ENCODE measurements at regions of chr3 and their contacts with region 1.

Region 1: GRCh38 chr3:170307671-170308403 is 49.7 kb upstream of the SKIL start:
- DNase-seq: no peak
- ATAC-seq: no peak
- H3K4me3 ChIP-seq: no peak overlapping the region
- H3K27ac ChIP-seq: no peak overlapping the region
- H3K4me1 ChIP-seq: no peaks in the 10 kb centered on the region
- H3K27me3 ChIP-seq: no peaks in the 10 kb centered on the region
- CTCF ChIP-seq: no peak
- POLR2A ChIP-seq: no peak
- RAD21 ChIP-seq: no peak

Region 2: GRCh38 chr3:170295586-170295985 is 12.3 kb before region 1 on chr3:
- CTCF ChIA-PET with region 1: no interaction called
- POLR2A ChIA-PET with region 1: no interaction called
- RAD21 ChIA-PET with region 1: no interaction called
- intact Hi-C with region 1: no loop called
- DNase-seq: no peak
- ATAC-seq: no peak
- H3K4me3 ChIP-seq: no peak overlapping the region
- H3K27ac ChIP-seq: no peak overlapping the region
- H3K4me1 ChIP-seq: no peaks in the 10 kb centered on the region
- H3K27me3 ChIP-seq: no peaks in the 10 kb centered on the region
- CTCF ChIP-seq: no peak
- POLR2A ChIP-seq: no peak
- RAD21 ChIP-seq: no peak

Region 3: DNA sequence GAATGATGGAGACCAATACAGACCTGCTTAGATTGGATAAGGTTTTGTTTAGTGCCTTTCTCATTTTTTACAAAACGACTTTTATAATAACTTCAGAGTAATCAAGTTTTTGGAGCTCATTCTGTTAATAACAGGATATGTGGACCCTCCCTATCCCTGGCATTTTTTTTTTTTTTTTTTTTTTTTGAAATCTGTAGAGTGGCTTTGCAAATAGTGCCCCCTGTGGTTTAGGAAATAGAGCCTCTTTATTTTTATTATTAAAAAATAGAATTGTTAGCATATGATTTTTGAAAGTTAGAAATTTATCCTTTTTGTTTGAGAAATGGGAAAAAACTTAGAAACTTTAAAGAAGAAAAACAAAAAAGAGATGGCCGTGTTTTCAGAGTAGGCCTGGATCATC is 61.1 kb after region 1 on chr3:
- CTCF ChIA-PET with region 1: no interaction called
- POLR2A ChIA-PET with region 1: no interaction called
- RAD21 ChIA-PET with region 1: no interaction called
- intact Hi-C with region 1: loop called (anchors 2 kb)
- DNase-seq: no peak
- ATAC-seq: no peak
- H3K4me3 ChIP-seq: no peak overlapping the region
- H3K27ac ChIP-seq: no peak overlapping the region
- H3K4me1 ChIP-seq: no peaks in the 10 kb centered on the region
- H3K27me3 ChIP-seq: no peaks in the 10 kb centered on the region
- CTCF ChIP-seq: peak; percentile 37 to 60 (median 38); a peak in 4 of 6 replicates
- POLR2A ChIP-seq: no peak
- RAD21 ChIP-seq: peak; percentile 65

Region 4: GRCh38 chr3:170848292-170848917 is 540.6 kb after region 1 on chr3:
- CTCF ChIA-PET with region 1: no interaction called
- POLR2A ChIA-PET with region 1: no interaction called
- RAD21 ChIA-PET with region 1: no interaction called
- intact Hi-C with region 1: loop called (anchors 5 kb)
- DNase-seq: no peak
- ATAC-seq: peak; percentile 61
- H3K4me3 ChIP-seq: no peak overlapping the region
- H3K27ac ChIP-seq: no peak overlapping the region
- H3K4me1 ChIP-seq: no peaks in the 10 kb centered on the region
- H3K27me3 ChIP-seq: no peaks in the 10 kb centered on the region
- CTCF ChIP-seq: peak; percentile 17 to 65 (median 46); a peak in 3 of 6 replicates
- POLR2A ChIP-seq: no peak
- RAD21 ChIP-seq: peak; percentile 64